Cardiac septum (tissue), 1 donor: ENCODE measurements at regions of chr10 and their contacts with region 1.

Region 1: DNA sequence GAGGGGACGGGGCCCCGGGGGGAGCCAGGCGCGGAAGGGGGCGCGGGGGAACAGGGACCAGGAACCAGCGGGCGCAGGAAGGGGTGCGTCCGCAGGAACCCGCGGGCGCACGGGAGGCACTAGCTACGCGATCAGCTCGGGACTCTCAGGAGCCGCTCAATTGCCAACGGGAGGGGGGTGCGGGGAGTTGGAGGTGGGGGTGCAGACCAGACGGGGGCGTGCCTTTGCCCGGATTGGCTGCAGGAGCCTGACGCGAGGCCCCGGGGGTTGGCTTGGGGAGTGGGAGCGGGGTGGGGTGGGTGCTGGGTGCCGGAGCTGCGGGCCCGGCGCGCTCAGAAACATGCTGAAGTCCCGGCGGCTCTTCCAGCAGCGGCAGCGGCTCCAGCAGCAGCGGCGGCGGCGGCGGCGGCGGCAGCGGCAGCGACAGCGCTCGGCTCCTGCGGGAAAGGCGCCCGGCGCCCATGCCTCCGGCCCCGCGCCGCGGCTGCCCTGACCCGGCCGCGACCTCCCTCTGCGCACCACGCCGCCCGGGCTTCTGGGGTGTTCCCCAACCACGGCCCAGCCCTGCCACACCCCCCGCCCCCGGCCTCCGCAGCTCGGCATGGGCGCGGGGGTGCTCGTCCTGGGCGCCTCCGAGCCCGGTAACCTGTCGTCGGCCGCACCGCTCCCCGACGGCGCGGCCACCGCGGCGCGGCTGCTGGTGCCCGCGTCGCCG is at the start of gene ADRB1:
- DNase-seq: peak; percentile 93
- total RNA-seq, gene ADRB1: 26.4 TPM

Region 2: DNA sequence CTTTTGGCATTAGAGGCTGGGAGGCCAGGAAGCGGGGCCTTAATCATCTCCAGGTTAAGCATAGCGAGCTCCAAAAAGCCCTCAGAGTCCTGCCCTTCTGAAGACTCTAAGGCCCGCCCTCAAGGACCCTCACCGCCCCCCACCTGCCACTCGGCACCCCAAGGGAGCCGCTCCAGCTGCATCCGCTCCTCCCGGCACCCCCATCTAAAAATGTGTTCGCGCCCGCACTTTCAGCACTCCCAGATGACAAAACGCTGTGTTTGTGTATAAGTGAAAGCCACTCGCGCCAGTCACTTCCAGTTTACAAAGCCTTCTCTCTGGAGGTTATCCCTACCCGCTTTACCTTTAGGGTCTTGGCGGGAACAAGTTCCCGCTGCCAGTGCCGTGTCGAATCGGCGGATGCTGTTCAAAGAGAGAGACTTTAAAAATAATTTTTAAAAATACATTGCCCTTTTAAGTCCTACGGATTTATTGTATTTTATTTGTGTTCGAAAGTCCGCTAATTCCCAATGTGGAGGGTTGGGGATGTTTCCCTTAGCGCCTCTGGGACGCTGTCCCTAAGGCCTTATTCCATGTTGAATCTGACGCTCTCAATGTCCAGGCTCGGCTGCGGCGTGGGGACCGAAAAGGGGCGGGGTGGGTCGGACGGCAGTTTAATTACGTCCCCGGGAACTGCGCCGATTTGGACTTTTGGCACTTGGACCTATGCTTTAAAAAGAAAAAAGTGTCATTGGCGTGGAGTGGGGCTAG is 189.5 kb before region 1 on chr10 and contains the starts of genes DCLRE1A and NHLRC2:
- intact Hi-C with region 1: loop called (anchors 2 kb)
- DNase-seq: peak; percentile 90
- total RNA-seq, gene DCLRE1A: 5.4 TPM
- total RNA-seq, gene NHLRC2: 58.4 TPM

Region 3: GRCh38 chr10:113891476-113891875 is 152.2 kb before region 1 on chr10:
- intact Hi-C with region 1: loop called (anchors 5 kb)
- DNase-seq: no peak

Region 4: DNA sequence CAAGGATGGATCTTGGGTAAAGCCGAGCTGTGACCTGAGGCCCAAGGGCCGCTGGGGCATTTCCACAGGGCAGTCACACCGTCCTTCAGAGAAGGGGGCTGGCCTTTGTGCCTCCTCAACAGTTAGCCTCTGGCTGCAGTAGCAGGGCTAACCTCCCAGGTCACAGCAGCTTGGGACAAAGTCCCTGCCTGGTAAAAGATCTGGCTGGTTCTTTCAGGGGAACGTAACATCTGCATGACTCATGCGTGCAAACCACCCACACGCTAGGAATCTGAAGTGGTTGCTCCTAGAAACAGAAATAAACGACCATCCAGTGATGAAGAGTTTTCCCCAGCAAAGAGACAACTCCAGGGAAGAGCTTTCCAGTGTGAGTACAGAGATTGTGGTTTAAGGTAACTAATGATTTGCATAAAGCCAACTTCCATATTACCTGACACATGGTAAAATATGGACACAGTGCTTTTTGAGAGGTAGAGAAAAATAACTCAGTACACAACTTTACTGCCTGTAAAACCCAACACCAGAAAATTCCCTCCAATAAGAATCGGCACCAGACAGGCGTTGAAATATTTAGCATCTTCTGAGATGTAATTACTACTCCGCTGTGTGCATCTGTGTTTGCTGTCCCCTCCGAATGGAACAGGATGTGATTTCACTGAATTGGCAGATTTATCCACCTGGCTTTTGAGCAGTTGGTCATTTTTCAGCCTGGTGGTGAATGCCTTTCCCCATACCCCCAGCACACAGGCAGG is 84.9 kb before region 1 on chr10:
- intact Hi-C with region 1: loop called (anchors 5 kb)
- DNase-seq: no peak

Region 5: DNA sequence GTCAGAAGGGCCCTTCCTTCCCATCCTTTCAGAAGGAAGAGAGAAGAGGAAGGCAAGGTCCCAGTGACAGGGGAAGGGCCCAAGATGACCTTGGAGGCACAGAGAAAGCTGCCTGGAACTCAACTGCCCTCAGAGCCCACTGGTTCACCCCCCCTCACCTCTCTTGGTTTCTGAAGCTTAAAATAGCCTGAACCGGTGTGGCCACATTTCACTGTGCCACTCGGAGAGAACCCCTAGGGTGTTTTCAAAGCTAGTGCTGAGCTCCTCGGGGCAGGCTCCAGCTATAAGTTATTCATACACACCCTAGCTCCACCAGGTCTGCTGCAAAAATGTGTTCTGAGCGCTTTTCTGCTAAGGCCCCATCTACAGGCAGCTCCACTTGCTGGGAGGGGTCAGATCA is 60.9 kb before region 1 on chr10:
- intact Hi-C with region 1: loop called (anchors 5 kb)
- DNase-seq: no peak

Region 6: DNA sequence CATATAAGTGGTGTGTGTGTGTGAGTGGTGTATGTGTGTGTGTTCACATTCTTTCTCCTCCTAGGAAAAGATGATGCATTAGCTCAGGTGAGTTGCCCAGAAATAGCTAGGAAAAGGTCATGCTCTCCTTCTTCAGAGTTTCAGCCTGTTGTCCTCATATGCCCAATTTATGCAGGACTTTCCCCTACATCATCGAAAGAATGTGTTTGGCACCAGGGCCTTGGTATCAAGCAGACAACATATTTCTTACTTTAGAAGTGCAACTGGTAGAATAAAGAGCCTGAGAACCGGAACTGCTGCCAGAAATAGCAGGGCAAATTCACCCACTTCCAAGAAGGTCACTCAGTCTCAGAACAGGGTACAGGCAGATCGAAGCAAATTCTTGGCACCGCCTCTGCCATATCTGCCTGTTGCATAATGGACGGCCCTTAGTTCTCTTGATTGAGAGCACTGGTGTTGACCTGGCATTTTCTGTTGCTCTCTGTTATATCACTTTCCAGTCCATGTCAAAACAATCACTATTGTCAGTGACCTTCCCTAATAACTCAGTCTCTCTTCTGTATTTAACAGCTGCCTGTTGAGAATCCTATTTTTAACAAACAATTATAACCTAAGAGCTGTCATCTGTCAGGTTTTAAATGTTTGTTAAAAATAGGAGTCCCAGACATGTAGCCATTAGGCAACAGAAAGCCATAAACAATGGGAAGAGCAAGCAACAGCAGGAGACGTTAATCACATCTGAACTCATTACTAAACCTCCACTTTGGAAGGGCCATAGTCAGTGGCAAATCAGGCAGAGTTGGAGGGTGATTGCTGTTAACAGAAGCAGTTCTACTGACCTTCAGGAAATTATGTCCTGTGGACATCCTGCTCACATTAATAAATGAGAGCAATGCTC is 20.7 kb after region 1 on chr10:
- intact Hi-C with region 1: loop called (anchors 2 kb)
- DNase-seq: no peak

Region 7: GRCh38 chr10:114077815-114078219 is 34.1 kb after region 1 on chr10:
- intact Hi-C with region 1: no loop called
- DNase-seq: no peak

Region 8: DNA sequence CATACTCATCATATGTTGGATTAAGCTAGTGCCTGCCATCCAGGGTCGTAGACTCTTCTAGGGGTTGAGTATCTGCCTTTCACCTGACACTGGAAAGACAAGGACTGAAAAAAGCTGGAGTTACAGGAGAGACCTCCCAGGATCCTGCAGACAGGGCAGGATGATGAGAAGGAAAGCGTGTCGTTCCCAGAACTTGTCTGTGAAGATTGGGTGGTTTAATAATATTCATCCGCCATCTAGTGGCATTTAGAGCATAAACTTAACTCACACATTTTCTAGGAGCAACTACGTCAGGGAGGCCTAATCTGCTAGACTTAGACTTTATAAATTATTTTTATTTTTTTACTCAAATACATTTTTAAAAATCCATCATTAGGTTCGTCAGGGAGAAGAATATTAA is 59.6 kb after region 1 on chr10:
- intact Hi-C with region 1: loop called (anchors 5 kb)
- DNase-seq: no peak